H1 (cell line): ENCODE measurements at regions of chr3 and their contacts with region 1.

Region 1: DNA sequence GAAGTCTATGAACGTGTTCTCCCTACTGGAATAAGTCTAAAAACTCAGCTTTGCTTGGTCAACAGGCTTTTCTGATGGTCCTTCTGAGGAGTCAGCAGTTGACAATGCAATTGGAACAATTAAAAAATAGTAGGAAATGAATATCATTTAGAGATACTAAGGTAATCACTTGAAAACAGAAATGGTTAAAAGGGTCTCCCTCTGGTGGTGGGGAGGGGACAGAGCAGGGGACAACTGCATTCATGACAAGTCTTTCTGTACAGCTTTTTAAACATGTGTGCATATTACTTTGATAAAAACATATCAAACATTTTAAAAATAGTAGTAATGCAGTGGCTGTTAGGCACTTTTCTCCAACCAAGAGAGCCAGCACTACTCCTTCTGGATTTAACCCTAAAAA is 119.9 kb upstream of the FHIT start:
- DNase-seq: peak in 1 of 2 experiments; percentile 49
- H3K4me3 ChIP-seq: no peak overlapping the region
- H3K27ac ChIP-seq: no peak overlapping the region
- H3K4me1 ChIP-seq: no peaks in the 10 kb centered on the region
- H3K27me3 ChIP-seq: no peaks in the 10 kb centered on the region
- CTCF ChIP-seq: peak; percentile 44 to 73 (median 46); a peak in 3 of 4 replicates
- EP300 ChIP-seq: no peak
- POLR2A ChIP-seq: no peak
- RAD21 ChIP-seq: peak; percentile 70 to 76

Region 2: GRCh38 chr3:61297821-61298220 is 73.3 kb before region 1 on chr3:
- CTCF ChIA-PET with region 1: interaction called, 15 read pairs
- POLR2A ChIA-PET with region 1: no interaction called
- DNase-seq: no peak
- H3K4me3 ChIP-seq: no peak overlapping the region
- H3K27ac ChIP-seq: no peak overlapping the region
- H3K4me1 ChIP-seq: peaks cover 0 to 8% (median 3%) of the 10 kb centered on the region in 4 experiments; a peak in 3 of 7 replicates
- H3K27me3 ChIP-seq: no peaks in the 10 kb centered on the region
- CTCF ChIP-seq: no peak
- EP300 ChIP-seq: no peak
- POLR2A ChIP-seq: no peak
- RAD21 ChIP-seq: no peak

Region 3: GRCh38 chr3:61353382-61353781 is 17.7 kb before region 1 on chr3:
- CTCF ChIA-PET with region 1: interaction called, 10 read pairs
- POLR2A ChIA-PET with region 1: no interaction called
- DNase-seq: no peak
- H3K4me3 ChIP-seq: no peak overlapping the region
- H3K27ac ChIP-seq: no peak overlapping the region
- H3K4me1 ChIP-seq: no peaks in the 10 kb centered on the region
- H3K27me3 ChIP-seq: no peaks in the 10 kb centered on the region
- CTCF ChIP-seq: no peak
- EP300 ChIP-seq: no peak
- POLR2A ChIP-seq: no peak
- RAD21 ChIP-seq: no peak; a peak in 1 of 4 replicates

Region 4: GRCh38 chr3:61381745-61382392 is 10.7 kb after region 1 on chr3:
- CTCF ChIA-PET with region 1: interaction called, 28 read pairs
- POLR2A ChIA-PET with region 1: interaction called, 3 read pairs
- DNase-seq: no peak
- H3K4me3 ChIP-seq: no peak overlapping the region
- H3K27ac ChIP-seq: no peak overlapping the region
- H3K4me1 ChIP-seq: no peaks in the 10 kb centered on the region; a peak in 1 of 7 replicates
- H3K27me3 ChIP-seq: no peaks in the 10 kb centered on the region
- CTCF ChIP-seq: peak in 2 of 3 experiments; percentile 47 to 70; a peak in 2 of 4 replicates
- EP300 ChIP-seq: no peak
- POLR2A ChIP-seq: no peak
- RAD21 ChIP-seq: peak; percentile 79 to 83